Uterus (tissue), 4 donors: ENCODE measurements at regions of chr7 and their contacts with region 1.

Region 1: GRCh38 chr7:130277763-130278643 is 11.3 kb downstream of the CPA2 start:
- DNase-seq: peak; percentile 60 to 63
- H3K4me3 ChIP-seq: no peak overlapping the region
- H3K27ac ChIP-seq: peak overlapping the region in 1 of 2 donors; percentile 74
- H3K4me1 ChIP-seq: no peaks in the 10 kb centered on the region
- H3K27me3 ChIP-seq: no peaks in the 10 kb centered on the region
- CTCF ChIP-seq: peak; percentile 65 to 71 (median 68)
- POLR2A ChIP-seq: no peak

Region 2: DNA sequence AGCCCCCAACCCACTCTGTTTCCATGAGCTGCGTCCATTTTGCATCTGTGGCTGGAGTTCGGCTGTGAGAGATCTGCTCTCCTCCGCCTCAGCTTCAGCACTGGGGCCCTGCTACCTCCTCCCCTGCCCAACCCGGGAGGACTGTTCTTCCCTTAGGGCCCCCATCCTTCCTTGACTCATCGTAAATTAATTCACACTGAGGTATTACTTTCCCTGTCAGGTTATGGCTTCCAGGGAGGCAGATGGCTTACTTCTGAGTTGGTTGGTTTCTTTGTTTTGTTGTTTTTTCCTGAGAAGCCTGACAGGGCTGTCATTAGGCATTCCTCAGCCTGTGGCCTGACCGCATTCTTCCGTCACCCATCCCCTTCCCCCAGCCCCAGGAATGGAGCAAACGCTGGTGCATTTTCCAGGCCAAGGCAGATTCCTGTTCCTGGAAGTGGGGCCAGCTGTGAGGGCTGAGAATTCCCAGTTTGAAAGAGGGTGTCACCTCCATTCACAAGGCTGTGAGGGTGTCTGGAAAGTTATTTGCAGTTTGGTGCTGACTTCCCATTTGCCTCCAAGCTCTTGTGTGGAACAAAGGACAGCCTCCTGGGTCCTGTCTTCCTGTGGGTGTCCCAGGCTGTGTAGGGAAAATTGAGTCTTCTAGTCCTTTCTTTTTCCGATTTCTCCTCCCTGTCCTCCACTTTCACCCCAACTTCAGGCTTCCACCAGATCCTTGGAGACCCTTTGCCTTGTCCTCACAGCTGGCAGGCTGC is 78.3 kb after region 1 on chr7:
- intact Hi-C with region 1: no loop called
- DNase-seq: peak; percentile 67 to 80
- H3K4me3 ChIP-seq: no peak overlapping the region
- H3K27ac ChIP-seq: peak overlapping the region; percentile 90 to 97
- H3K4me1 ChIP-seq: peaks cover 13 to 20% of the 10 kb centered on the region in 2 donors
- H3K27me3 ChIP-seq: no peaks in the 10 kb centered on the region
- CTCF ChIP-seq: no peak
- POLR2A ChIP-seq: no peak

Region 3: DNA sequence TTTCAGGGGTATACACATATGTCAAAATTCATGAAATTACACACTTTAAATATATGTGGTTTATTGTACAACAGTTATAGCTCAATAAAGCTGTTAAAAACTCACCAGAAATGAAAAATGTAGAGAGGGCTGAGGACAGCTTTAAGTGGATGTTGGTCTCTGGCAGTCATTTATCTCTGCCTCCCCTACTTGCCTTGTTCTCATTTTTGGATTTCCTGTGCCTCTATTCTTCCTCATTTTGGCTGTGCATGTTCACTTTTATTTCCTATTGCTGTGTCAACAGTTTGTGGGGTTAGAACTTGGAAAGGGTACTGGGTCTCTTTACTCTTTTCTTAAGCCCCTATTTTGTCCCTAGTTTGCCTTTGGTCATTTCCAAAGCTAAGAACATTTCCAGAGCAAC is 195.3 kb after region 1 on chr7:
- intact Hi-C with region 1: no loop called
- DNase-seq: no peak
- H3K4me3 ChIP-seq: no peak overlapping the region
- H3K27ac ChIP-seq: no peak overlapping the region
- H3K4me1 ChIP-seq: no peaks in the 10 kb centered on the region
- H3K27me3 ChIP-seq: no peaks in the 10 kb centered on the region
- CTCF ChIP-seq: no peak
- POLR2A ChIP-seq: no peak

Region 4: DNA sequence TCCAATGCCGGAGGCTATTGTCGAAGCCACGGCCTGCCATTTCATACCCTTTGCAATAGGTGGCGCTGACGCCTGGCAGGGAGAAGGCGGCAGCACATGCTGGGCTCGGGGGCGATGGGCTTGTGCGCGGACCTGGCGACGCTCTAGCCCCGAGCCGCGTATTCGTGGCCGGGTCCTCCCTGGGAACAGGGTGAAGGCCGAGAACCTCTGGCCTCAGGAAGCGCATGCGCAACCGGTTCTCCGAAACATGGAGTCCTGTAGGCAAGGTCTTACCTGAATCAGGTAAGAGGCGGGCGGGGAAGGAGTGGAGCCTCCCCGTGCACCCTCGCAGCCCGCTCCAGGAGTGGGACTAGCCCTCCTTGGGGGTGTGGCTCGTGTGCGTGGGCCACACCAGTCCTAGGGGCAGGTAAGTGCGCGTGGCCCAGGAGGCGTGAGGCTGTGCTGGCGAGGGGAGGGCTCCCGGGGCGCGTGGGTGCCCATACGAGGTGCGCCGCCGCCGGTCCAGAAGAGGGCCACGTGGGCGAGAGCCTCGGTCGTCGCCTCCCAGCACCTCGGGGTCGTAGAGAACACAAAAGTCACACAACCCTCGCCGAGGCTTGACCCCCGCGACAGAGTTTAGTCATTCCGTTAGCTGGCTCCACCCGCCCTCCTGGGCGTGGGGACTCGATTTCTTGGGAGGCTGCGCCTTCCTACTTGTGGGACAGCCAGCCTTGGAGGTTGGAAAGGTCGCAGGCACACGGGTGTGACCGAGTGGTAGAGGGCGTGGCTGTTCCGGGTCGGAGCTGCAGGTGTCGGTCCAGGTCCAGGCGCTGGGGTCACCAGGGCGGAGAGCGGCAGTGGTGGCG is 208.3 kb after region 1 on chr7:
- intact Hi-C with region 1: loop called (anchors 10 kb)
- DNase-seq: no peak
- H3K4me3 ChIP-seq: peak overlapping the region; percentile 22 to 25
- H3K27ac ChIP-seq: peak overlapping the region in 1 of 2 donors; percentile 19
- H3K4me1 ChIP-seq: no peaks in the 10 kb centered on the region
- H3K27me3 ChIP-seq: no peaks in the 10 kb centered on the region
- CTCF ChIP-seq: peak in 3 of 4 experiments; percentile 20 to 33 (median 29)
- POLR2A ChIP-seq: no peak